OCI-LY7 (cell line): ENCODE measurements at regions of chr15 and their contacts with region 1.

Region 1: DNA sequence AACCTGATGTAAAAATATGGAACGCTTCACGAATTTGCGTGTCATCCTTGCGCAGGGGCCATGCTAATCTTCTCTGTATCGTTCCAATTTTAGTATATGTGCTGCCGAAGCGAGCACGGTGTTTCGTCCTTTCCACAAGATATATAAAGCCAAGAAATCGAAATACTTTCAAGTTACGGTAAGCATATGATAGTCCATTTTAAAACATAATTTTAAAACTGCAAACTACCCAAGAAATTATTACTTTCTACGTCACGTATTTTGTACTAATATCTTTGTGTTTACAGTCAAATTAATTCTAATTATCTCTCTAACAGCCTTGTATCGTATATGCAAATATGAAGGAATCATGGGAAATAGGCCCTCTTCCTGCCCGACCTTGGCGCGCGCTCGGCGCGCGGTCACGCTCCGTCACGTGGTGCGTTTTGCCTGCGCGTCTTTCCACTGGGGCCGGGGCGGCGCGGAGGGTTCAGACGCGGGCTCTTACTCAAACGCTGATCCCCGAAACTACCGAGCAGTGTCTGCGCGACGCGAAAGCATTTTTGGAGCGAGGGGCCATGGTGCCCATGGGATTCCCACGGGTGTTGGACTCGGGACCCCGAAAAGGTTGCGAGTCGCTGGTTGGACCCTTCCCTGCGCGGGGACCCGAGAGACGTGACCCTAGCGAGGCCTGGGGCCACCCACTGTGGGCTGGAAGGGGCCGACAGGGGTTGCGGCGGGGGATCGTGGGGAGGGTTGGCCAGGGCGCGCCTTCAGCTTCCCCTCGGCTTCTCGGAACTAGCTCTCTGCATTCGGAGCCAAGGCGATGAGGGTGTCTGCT is at the start of gene RNU6-1:
- DNase-seq: peak; percentile 97
- H3K4me3 ChIP-seq: peak within 1 kb of the TSS; percentile 73
- H3K27ac ChIP-seq: peak within 1 kb of the TSS; percentile 86
- H3K4me1 ChIP-seq: peaks cover 63% of the 10 kb centered on the region
- CTCF ChIP-seq: no peak
- total RNA-seq, gene RNU6-1: not detected in 2 replicates

Region 2: GRCh38 chr15:67456677-67457529 is 383.2 kb before region 1 on chr15:
- CTCF ChIA-PET with region 1: no interaction called
- POLR2A ChIA-PET with region 1: interaction called, 3 read pairs
- intact Hi-C with region 1: loop called (anchors 1 kb)
- DNase-seq: peak; percentile 79
- H3K4me3 ChIP-seq: no peak overlapping the region
- H3K27ac ChIP-seq: no peak overlapping the region
- H3K4me1 ChIP-seq: no peaks in the 10 kb centered on the region
- CTCF ChIP-seq: peak; percentile 98

Region 3: GRCh38 chr15:67521029-67521811 is 318.9 kb before region 1 on chr15 and contains the start of gene C15orf61:
- CTCF ChIA-PET with region 1: no interaction called
- POLR2A ChIA-PET with region 1: no interaction called
- intact Hi-C with region 1: loop called (anchors 5 kb)
- DNase-seq: peak; percentile 92
- H3K4me3 ChIP-seq: peak within 1 kb of the TSS; percentile 83
- H3K27ac ChIP-seq: peak within 1 kb of the TSS; percentile 65
- H3K4me1 ChIP-seq: peaks cover 25% of the 10 kb centered on the region
- CTCF ChIP-seq: 0 out of 2 replicates have a peak, but pooled peaks have one; percentile 47
- total RNA-seq, gene C15orf61: 13.3 and 18.3 TPM in 2 replicates

Region 4: DNA sequence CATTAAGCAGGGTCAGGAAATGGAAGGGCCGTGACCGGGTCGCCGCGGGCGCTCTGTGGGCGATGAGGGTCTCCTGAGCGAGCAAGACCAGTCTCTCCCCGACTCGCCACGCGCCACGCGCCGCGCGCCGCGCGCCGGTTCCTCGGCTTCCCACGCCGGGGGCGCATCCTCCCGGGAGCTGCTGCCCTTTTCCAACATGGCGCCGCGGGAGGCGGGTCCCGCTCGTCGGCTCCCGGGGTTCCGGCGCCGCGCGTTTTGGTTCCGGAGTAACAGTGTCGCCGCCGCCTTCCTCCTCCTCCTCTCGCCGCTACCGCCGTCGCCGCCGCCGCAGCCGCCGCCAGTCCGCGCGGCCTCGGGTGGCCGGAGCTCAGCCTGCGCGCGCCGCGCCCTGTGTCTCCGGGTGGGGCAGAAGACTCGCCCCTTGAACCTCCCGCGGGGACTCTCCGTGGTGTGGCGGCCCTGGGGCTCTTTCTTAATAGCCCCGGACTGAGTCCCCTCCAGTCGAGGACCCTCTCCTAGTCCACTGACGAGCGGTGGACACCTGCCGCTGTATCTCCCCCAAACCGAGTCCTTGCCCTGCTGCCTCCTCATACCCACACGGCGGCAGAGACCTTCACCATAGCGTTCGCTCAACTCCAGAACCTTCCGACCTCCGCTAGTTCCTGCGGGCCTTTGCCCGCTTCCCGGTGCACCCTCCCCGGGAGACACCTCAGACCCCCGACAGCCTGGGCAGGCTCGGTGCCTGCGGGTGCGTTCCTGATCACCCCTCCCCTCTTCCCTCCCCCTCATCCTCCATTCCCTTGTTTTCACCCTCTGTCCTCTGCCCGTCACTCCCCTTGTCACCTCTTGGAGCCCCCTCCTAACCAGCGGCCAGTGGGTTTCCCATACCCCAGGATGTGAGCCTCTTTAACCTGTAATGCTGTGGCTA is 297.5 kb before region 1 on chr15 and contains the start of gene MAP2K5:
- CTCF ChIA-PET with region 1: no interaction called
- POLR2A ChIA-PET with region 1: no interaction called
- intact Hi-C with region 1: loop called (anchors 5 kb)
- DNase-seq: peak; percentile 83
- H3K4me3 ChIP-seq: peak within 1 kb of the TSS; percentile 81
- H3K27ac ChIP-seq: peak within 1 kb of the TSS; percentile 77
- H3K4me1 ChIP-seq: peaks cover 59% of the 10 kb centered on the region
- CTCF ChIP-seq: no peak
- total RNA-seq, gene MAP2K5: 9.0 and 10.2 TPM in 2 replicates

Region 5: GRCh38 chr15:67854358-67854757 is 14.2 kb after region 1 on chr15:
- CTCF ChIA-PET with region 1: interaction called, 4 read pairs
- POLR2A ChIA-PET with region 1: interaction called, 16 read pairs
- intact Hi-C with region 1: no loop called
- DNase-seq: peak; percentile 46
- H3K4me3 ChIP-seq: peak overlapping the region; percentile 58
- H3K27ac ChIP-seq: peak overlapping the region; percentile 75
- H3K4me1 ChIP-seq: peaks cover 87% of the 10 kb centered on the region
- CTCF ChIP-seq: no peak

Region 6: DNA sequence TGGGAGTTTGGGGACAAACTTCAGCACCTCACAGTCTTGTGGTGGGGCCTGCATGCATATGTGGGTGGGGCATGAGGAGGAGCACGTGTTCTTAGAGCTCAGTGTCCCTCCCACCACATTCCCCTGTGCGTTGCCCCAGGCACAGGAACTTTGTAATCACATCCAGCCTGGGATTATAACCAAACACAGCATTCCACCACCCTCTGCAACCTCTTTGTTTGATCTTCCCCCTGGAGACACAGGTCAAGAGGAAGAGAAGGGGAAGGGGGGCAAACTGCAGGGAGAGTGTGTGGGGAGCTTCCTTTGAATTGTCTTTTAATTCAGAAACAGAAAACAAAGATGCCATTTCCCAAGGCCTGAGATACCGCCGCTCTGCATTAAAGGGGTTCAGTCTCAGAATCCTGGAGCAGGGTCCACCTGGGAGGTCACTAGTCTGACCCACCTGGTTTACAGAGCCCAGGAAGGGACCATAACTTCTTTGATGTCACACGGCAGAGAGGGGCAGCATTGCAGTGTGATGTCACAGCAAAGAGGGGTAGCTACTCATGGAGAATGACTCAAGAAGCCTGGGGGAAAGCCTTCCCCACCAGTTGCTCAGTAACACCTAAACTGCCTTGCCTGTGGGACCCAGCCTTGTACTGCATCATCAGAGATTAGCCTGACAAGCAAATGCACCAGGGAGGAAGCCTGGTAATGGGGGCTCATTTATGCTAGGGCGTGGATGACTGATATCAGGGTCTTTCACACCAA is 106.0 kb after region 1 on chr15:
- CTCF ChIA-PET with region 1: no interaction called
- POLR2A ChIA-PET with region 1: no interaction called
- intact Hi-C with region 1: no loop called
- DNase-seq: peak; percentile 16
- H3K4me3 ChIP-seq: peak overlapping the region; percentile 38
- H3K27ac ChIP-seq: peak overlapping the region; percentile 52
- H3K4me1 ChIP-seq: peaks cover 20% of the 10 kb centered on the region
- CTCF ChIP-seq: no peak

Region 7: DNA sequence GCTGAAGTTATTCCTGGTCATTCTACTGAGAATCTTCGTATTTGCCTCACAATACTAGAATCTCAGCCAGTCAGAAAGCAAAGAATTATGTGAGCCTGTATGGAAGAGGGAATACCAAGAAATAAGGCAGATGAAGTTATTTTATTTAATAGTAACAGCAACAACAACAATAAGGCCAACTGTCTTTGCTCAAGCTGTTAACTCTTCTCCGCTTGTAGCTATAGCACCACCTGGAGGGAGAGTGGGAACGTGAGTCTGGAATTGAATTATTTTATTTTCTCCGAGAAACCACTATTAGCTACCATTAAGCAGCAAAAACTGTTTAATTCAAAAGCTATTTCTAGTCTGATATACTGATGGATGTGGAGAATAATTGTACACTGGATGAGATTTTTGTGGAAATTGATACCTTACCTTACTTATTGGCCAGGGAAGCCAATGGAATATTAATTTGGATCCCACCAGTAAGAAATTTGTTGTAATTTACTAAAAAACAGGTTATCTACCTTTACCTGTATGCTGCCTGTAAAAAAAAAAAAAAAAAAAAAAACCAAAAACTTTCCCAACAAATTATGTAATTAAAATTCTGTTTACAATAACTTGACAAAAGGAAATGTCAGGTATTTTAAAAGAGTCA is 314.9 kb after region 1 on chr15:
- CTCF ChIA-PET with region 1: no interaction called
- POLR2A ChIA-PET with region 1: no interaction called
- intact Hi-C with region 1: loop called (anchors 1 kb)
- DNase-seq: peak; percentile 72
- H3K4me3 ChIP-seq: no peak overlapping the region
- H3K27ac ChIP-seq: peak overlapping the region; percentile 16
- H3K4me1 ChIP-seq: peaks cover 8% of the 10 kb centered on the region
- CTCF ChIP-seq: peak; percentile 96